Activated CD4-positive, alpha-beta memory T cell treated with anti-CD3 and anti-CD28 coated beads for 36 hours (primary cell): ENCODE measurements at regions of chr5 and their contacts with region 1.

Region 1: GRCh38 chr5:36882250-36882649 is 5.7 kb downstream of the NIPBL start:
- DNase-seq: no peak
- H3K4me3 Mint-ChIP-seq: peak overlapping the region; percentile 7
- H3K27ac Mint-ChIP-seq: peak overlapping the region; percentile 49
- H3K4me1 Mint-ChIP-seq: peaks cover 61% of the 10 kb centered on the region
- H3K27me3 Mint-ChIP-seq: no peaks in the 10 kb centered on the region

Region 2: DNA sequence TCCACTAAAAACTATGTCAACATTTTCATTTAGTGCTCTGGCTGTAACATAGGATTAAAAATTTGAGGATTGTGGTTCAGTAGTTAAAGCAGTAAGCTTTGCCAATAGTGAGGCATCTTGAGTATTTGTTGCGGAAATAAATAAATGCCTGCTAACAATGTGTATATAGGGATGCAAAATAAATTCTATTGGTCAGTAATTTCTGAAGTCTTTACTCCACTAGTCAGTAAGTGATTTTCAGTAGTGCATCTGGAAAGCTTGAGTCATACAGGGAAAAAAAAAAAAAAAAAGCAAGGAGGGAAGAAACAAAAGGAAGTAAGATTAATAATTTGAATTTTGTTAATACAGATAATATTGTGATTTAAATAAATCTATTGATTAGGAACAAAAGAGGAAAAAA is 15.4 kb after region 1 on chr5:
- CTCF ChIA-PET with region 1: interaction called, 3 read pairs
- POLR2A ChIA-PET with region 1: interaction called, 4 read pairs
- intact Hi-C with region 1: loop called (anchors 2 kb)
- DNase-seq: no peak
- H3K4me3 Mint-ChIP-seq: no peak overlapping the region
- H3K27ac Mint-ChIP-seq: no peak overlapping the region
- H3K4me1 Mint-ChIP-seq: peaks cover 71% of the 10 kb centered on the region
- H3K27me3 Mint-ChIP-seq: no peaks in the 10 kb centered on the region

Region 3: DNA sequence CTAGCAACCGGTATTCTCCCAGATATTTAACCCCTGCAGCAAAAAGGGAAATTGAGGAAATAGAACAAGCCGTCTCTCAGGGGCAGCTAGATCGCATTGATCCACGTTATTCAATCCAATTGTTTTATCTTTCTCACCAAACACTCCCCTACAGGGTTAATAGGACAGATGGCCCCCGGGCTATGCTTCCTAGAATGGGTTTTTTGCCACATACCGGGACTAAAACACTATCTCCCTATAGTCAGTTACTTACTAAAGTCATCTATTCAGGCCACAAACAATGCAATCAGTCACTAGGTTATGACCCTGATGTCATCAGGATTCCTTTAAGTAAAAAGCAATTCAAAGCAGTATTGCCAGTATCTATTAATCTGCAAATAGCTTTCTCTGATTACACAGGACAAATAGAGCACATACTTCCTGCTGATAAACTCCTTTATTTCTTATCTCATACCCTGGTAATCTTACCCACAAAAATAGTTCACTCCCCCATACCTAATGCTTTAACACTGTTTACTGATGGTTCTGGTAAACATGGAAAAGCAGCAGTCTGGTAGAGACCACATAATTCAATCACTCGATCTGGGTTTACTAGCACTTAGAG is 208.0 kb after region 1 on chr5:
- CTCF ChIA-PET with region 1: no interaction called
- POLR2A ChIA-PET with region 1: no interaction called
- intact Hi-C with region 1: no loop called
- DNase-seq: no peak
- H3K4me3 Mint-ChIP-seq: no peak overlapping the region
- H3K27ac Mint-ChIP-seq: no peak overlapping the region
- H3K4me1 Mint-ChIP-seq: no peaks in the 10 kb centered on the region
- H3K27me3 Mint-ChIP-seq: no peaks in the 10 kb centered on the region